Heart left ventricle (tissue), 16 donors: ENCODE measurements at regions of chr3 and their contacts with region 1.

Region 1: DNA sequence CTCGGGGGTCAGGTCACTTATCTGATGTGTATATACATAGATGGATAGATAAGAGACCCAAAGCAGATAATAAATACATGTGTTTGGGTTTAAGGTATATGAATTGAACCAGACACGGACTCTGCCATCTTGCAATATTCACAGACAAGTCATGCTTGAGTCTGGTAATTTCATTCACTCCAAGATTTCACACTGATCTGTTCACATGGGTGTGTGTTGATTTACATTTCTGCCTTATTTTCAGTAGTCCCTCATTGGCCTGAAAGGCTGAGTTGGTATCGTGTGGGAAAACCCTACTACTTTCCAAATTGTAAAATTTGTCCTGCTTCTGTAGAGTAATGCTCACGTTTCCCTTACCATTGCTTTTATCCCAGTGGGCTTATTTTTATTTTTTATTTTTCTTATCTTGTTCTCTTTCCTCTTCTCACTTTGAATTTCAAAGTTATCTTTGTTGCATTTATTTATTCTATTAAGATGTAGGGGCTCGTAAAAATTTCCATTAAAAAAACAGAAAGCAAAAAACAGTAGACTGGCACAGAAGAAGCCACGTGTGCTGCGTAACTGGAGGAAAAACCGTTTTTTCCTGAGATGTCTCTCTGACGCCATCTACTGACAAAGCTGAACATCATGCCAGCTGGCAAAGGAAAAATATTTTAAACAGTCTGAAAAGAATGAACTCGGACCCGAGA is 10.8 kb upstream of the MFSD1 start:
- DNase-seq: peak in 1 of 5 donors; percentile 32
- ATAC-seq: peak in 2 of 4 donors; percentile 45 to 65
- H3K4me3 ChIP-seq: peak overlapping the region in 5 of 12 donors; percentile 11 to 32 (median 21)
- H3K27ac ChIP-seq: no peak overlapping the region
- H3K4me1 ChIP-seq: peaks cover 0 to 10% (median 0%) of the 10 kb centered on the region in 12 donors
- H3K27me3 ChIP-seq: no peaks in the 10 kb centered on the region
- CTCF ChIP-seq: peak; percentile 74 to 95 (median 86)
- POLR2A ChIP-seq: no peak

Region 2: GRCh38 chr3:158539414-158540014 is 251.5 kb before region 1 on chr3:
- intact Hi-C with region 1: loop called in 5 of 10 experiments (anchors 5 to 10 kb)
- DNase-seq: peak in 1 of 5 donors; percentile 7
- ATAC-seq: peak in 1 of 4 donors; percentile 50
- H3K4me3 ChIP-seq: no peak overlapping the region
- H3K27ac ChIP-seq: no peak overlapping the region
- H3K4me1 ChIP-seq: no peaks in the 10 kb centered on the region
- H3K27me3 ChIP-seq: no peaks in the 10 kb centered on the region
- CTCF ChIP-seq: peak; percentile 37 to 70 (median 61)
- POLR2A ChIP-seq: no peak

Region 3: GRCh38 chr3:158659454-158660237 is 131.4 kb before region 1 on chr3:
- intact Hi-C with region 1: loop called in 8 of 10 experiments (anchors 2 to 10 kb)
- DNase-seq: peak in 3 of 5 donors; percentile 37 to 43 (median 39)
- ATAC-seq: peak; percentile 42 to 92 (median 84)
- H3K4me3 ChIP-seq: no peak overlapping the region
- H3K27ac ChIP-seq: peak overlapping the region in 10 of 12 donors; percentile 14 to 71 (median 54)
- H3K4me1 ChIP-seq: peaks cover 0 to 14% (median 2%) of the 10 kb centered on the region in 12 donors
- H3K27me3 ChIP-seq: no peaks in the 10 kb centered on the region
- CTCF ChIP-seq: peak; percentile 30 to 77 (median 68)
- POLR2A ChIP-seq: no peak

Region 4: DNA sequence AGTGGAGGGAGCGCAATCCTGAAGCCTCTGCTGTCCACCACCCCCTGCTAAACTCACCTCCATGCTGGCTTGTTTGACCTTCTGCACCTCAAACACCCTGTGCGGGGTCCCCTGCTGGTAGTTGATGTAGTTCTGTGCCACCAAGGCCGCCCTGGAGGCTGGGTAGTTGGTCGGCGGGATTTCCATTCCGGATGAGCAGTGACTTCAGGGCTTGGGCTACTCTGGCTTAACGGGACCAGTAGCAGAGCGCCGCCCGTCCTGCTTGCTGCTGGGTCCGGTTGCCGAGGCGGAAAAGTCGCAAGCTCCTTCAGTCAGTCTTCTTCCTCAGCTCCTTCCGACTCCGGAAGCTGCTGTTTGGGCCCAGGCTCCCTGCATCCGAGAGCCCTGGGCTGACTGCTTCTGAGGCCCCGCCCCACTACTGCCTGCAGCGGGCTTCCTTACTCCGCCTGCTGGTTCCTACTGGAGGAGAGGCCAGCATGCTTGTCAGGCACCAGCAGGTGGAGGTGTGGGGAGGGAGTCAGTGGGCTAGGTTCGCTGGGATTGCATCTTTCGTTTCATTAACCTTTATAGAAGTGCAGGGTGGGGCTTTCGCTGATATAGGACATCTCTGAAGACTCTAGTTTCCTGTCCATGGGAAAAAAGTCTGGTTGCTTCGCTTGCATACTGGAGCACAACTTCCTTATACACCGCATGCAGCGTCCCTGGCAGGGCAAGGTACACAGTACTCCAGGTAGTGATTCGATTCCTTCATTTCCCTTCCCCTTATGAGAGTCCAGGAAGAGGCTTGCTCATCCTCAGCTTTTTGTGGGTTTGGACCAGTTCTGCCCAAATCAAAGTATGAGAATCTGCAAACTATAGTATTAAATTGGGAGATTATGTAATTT is 118.5 kb before region 1 on chr3 and contains the start of gene LXN:
- intact Hi-C with region 1: loop called in 4 of 10 experiments (anchors 5 to 10 kb)
- DNase-seq: peak; percentile 83 to 90 (median 85)
- ATAC-seq: peak; percentile 95 to 99 (median 99)
- H3K4me3 ChIP-seq: peak within 1 kb of the TSS in 11 of 12 donors; percentile 21 to 68 (median 60)
- H3K27ac ChIP-seq: peak within 1 kb of the TSS; percentile 4 to 82 (median 72)
- H3K4me1 ChIP-seq: peaks cover 0 to 23% (median 5%) of the 10 kb centered on the region in 12 donors
- H3K27me3 ChIP-seq: no peaks in the 10 kb centered on the region
- CTCF ChIP-seq: peak; percentile 34 to 89 (median 55)
- POLR2A ChIP-seq: no peak
- total RNA-seq, gene LXN: 2.3 to 21.8 (median 3.5) TPM

Region 5: DNA sequence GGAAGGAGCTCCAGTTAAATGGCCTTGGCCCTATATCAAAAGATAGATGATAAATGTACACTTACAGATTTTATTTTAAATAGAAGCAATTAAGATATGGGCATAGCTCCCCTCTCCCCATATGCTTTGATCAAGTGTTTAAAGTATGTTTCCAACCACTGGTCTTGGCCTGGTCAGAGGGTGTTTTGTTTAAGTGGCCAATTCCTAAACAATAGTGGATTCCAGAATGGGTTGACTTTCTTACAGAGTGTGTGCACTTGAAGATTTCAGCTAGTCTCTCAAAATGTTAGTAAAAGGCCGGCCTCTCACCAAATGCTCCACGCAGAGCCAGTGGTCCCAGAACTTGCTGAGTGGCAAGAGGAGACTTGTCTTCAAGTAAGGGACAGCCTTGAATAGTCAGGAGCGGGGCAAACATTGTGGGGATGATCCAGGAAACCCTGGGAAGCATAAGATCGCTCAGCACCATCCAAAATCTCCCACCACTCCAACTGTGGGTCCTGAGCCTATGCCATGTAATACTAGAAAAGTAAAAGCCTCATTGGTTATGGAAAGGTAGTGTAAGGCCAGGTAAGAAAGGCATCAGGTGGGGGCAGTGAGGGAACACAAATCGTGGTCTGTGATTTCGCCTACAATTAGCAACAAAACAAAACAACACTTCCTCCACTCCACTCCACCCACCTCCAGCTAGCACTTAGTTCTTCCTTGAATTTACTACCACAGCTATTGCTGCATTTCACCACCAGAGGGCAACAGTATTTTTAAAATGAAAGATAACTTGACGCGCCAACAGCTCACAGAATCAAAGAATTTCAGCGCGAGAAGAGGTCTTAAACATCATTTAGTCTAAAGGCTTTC is 63.6 kb before region 1 on chr3:
- intact Hi-C with region 1: loop called (anchors 1 to 5 kb)
- DNase-seq: peak in 2 of 5 donors; percentile 54 to 55
- ATAC-seq: peak in 1 of 4 donors; percentile 45
- H3K4me3 ChIP-seq: peak overlapping the region in 4 of 12 donors; percentile 15 to 29 (median 20)
- H3K27ac ChIP-seq: peak overlapping the region in 3 of 12 donors; percentile 7 to 48 (median 28)
- H3K4me1 ChIP-seq: peaks cover 0 to 65% (median 29%) of the 10 kb centered on the region in 12 donors
- H3K27me3 ChIP-seq: no peaks in the 10 kb centered on the region
- CTCF ChIP-seq: peak; percentile 73 to 89 (median 84)
- POLR2A ChIP-seq: no peak